Naive thymus-derived CD4-positive, alpha-beta T cell (primary cell): ENCODE measurements at regions of chr4 and their contacts with region 1.

Region 1: GRCh38 chr4:7939377-7940108 is at the start of gene AFAP1:
- DNase-seq: peak; percentile 84 to 95 (median 89)
- ATAC-seq: peak; percentile 95
- H3K4me3 ChIP-seq: peak within 1 kb of the TSS; percentile 68
- H3K4me3 Mint-ChIP-seq: peak within 1 kb of the TSS; percentile 64 to 91 (median 74)
- H3K27ac ChIP-seq: peak within 1 kb of the TSS; percentile 78
- H3K27ac Mint-ChIP-seq: peak within 1 kb of the TSS in 4 of 9 donors; percentile 63 to 89 (median 74)
- H3K4me1 ChIP-seq: peaks cover 10 to 12% of the 10 kb centered on the region in 2 donors
- H3K4me1 Mint-ChIP-seq: peaks cover 16 to 42% (median 33%) of the 10 kb centered on the region in 7 donors
- H3K27me3 ChIP-seq: no peaks in the 10 kb centered on the region
- H3K27me3 Mint-ChIP-seq: peaks cover 0 to 30% (median 0%) of the 10 kb centered on the region in 5 donors
- total RNA-seq, gene AFAP1: 8.6 to 27.2 (median 13.3) TPM

Region 2: DNA sequence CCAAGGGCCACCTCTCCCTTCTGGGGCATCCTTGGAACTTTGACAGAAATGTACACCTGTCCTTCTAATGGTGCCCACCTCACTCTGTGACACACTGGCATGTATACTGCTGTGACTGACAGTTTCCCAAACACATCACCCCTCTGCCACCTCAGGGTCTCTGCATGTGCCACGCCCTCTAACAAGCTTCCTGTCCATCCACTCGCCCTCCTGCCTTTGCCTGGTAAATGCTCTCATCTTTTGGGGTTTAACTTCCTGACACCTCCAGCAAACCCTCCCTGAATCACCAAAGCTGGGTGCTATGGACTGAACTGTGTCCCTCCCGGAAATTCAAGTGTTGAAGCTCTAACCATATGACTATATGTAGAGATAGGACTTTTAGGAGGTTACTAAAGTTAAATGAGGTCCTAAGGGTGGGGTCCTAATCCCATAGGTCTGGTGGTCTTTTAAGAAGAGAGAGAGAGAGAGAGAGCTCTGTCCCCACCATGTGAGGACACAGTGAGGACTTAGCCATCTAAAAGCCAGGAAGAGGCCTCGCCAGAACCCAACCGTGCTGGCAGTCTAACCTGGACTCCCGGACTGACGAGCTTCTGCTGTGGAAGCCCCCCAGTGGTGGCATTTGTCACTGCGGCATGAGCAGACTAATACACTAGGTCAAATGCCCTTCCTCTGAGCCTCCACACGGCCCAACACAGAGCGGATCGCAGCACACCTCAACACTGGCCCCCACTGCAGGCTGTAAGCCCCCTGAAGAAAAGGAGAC is 95.5 kb before region 1 on chr4:
- CTCF ChIA-PET with region 1: interaction called, 6 read pairs
- POLR2A ChIA-PET with region 1: interaction called, 5 read pairs
- intact Hi-C with region 1: loop called in 1 of 2 experiments (anchors 1 kb)
- DNase-seq: peak; percentile 12 to 66 (median 42)
- ATAC-seq: peak; percentile 84
- H3K4me3 ChIP-seq: no peak overlapping the region
- H3K4me3 Mint-ChIP-seq: peak overlapping the region in 2 of 10 donors; percentile 1 to 45
- H3K27ac ChIP-seq: no peak overlapping the region
- H3K27ac Mint-ChIP-seq: peak overlapping the region in 4 of 9 donors; percentile 10 to 62 (median 22)
- H3K4me1 ChIP-seq: peaks cover 4 to 6% of the 10 kb centered on the region in 2 donors
- H3K4me1 Mint-ChIP-seq: peaks cover 17 to 46% (median 40%) of the 10 kb centered on the region in 7 donors
- H3K27me3 ChIP-seq: no peaks in the 10 kb centered on the region
- H3K27me3 Mint-ChIP-seq: no peaks in the 10 kb centered on the region

Region 3: GRCh38 chr4:7863911-7864681 is 75.4 kb before region 1 on chr4:
- CTCF ChIA-PET with region 1: interaction called, 5 read pairs
- POLR2A ChIA-PET with region 1: interaction called, 5 read pairs
- intact Hi-C with region 1: loop called in 1 of 2 experiments (anchors 1 kb)
- DNase-seq: peak in 7 of 9 donors; percentile 20 to 68 (median 38)
- ATAC-seq: peak; percentile 60
- H3K4me3 ChIP-seq: no peak overlapping the region
- H3K4me3 Mint-ChIP-seq: peak overlapping the region in 7 of 10 donors; percentile 36 to 75 (median 65)
- H3K27ac ChIP-seq: no peak overlapping the region
- H3K27ac Mint-ChIP-seq: peak overlapping the region; percentile 67 to 96 (median 89)
- H3K4me1 ChIP-seq: peaks cover 0 to 10% of the 10 kb centered on the region in 2 donors
- H3K4me1 Mint-ChIP-seq: peaks cover 8 to 45% (median 33%) of the 10 kb centered on the region in 7 donors
- H3K27me3 ChIP-seq: no peaks in the 10 kb centered on the region
- H3K27me3 Mint-ChIP-seq: peaks cover 0 to 6% (median 0%) of the 10 kb centered on the region in 5 donors

Region 4: GRCh38 chr4:7890635-7891393 is 48.7 kb before region 1 on chr4:
- CTCF ChIA-PET with region 1: no interaction called
- POLR2A ChIA-PET with region 1: no interaction called
- intact Hi-C with region 1: loop called in 1 of 2 experiments (anchors 5 kb)
- DNase-seq: no peak
- ATAC-seq: no peak
- H3K4me3 ChIP-seq: no peak overlapping the region
- H3K4me3 Mint-ChIP-seq: no peak overlapping the region
- H3K27ac ChIP-seq: no peak overlapping the region
- H3K27ac Mint-ChIP-seq: peak overlapping the region in 1 of 9 donors; percentile 23
- H3K4me1 ChIP-seq: no peaks in the 10 kb centered on the region
- H3K4me1 Mint-ChIP-seq: peaks cover 6 to 44% (median 33%) of the 10 kb centered on the region in 7 donors
- H3K27me3 ChIP-seq: no peaks in the 10 kb centered on the region
- H3K27me3 Mint-ChIP-seq: peaks cover 0 to 6% (median 3%) of the 10 kb centered on the region in 5 donors

Region 5: DNA sequence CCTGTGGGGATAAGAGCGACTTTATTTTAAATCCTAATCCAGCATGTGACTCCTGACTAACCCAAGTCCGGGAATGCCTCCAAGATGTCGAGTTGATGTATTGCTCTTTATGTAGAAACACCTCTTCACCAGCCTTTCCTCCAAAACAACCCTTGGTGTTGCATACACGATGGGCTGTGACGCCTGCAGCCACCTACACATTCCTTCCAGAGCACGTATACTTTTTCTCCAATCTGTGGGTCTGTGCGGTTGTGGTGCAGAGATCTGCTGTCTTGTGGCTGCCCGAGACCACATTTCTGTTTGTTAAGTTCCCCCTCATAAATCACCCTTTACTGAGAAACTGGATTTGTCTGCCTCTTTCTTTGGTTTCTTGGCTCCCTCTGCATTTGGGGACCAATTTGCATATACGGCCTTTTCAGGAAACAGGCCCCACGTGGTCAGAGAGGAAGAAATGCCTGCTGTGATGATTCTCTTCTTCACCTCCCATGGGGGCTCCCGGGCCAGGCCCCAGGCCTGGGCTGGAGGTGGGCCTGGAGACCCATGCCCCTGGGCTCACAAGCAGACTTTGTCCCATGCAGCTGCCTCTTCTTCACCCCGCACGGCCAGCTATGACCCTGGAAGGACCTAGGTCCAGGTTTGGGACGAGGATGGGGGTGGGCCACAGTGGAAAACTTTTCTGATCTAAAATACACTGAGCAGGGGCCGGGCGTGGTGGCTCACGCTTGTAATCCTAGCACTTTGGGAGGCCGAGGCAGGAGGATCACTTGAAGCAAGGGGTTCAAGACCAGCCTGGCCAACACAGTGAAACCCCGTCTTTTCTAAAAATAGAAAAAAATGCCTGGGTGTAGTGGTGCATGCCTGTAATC is 21.5 kb after region 1 on chr4:
- CTCF ChIA-PET with region 1: interaction called, 3 read pairs
- POLR2A ChIA-PET with region 1: interaction called, 12 read pairs
- intact Hi-C with region 1: loop called (anchors 1 kb)
- DNase-seq: peak in 8 of 9 donors; percentile 20 to 81 (median 31)
- ATAC-seq: peak; percentile 62
- H3K4me3 ChIP-seq: no peak overlapping the region
- H3K4me3 Mint-ChIP-seq: peak overlapping the region in 9 of 10 donors; percentile 38 to 74 (median 58)
- H3K27ac ChIP-seq: no peak overlapping the region
- H3K27ac Mint-ChIP-seq: peak overlapping the region; percentile 38 to 87 (median 72)
- H3K4me1 ChIP-seq: peaks cover 22 to 26% of the 10 kb centered on the region in 2 donors
- H3K4me1 Mint-ChIP-seq: peaks cover 16 to 54% (median 33%) of the 10 kb centered on the region in 7 donors
- H3K27me3 ChIP-seq: no peaks in the 10 kb centered on the region
- H3K27me3 Mint-ChIP-seq: peaks cover 0 to 6% (median 0%) of the 10 kb centered on the region in 5 donors

Region 6: GRCh38 chr4:7987148-7987989 is 47.8 kb after region 1 on chr4:
- CTCF ChIA-PET with region 1: interaction called, 4 read pairs
- POLR2A ChIA-PET with region 1: no interaction called
- intact Hi-C with region 1: loop called in 1 of 2 experiments (anchors 1 kb)
- DNase-seq: peak; percentile 48 to 74 (median 67)
- ATAC-seq: peak; percentile 83
- H3K4me3 ChIP-seq: no peak overlapping the region
- H3K4me3 Mint-ChIP-seq: no peak overlapping the region
- H3K27ac ChIP-seq: no peak overlapping the region
- H3K27ac Mint-ChIP-seq: peak overlapping the region in 1 of 9 donors; percentile 67
- H3K4me1 ChIP-seq: no peaks in the 10 kb centered on the region
- H3K4me1 Mint-ChIP-seq: peaks cover 0 to 11% (median 9%) of the 10 kb centered on the region in 7 donors
- H3K27me3 ChIP-seq: no peaks in the 10 kb centered on the region
- H3K27me3 Mint-ChIP-seq: peaks cover 0 to 3% (median 0%) of the 10 kb centered on the region in 5 donors

Region 7: DNA sequence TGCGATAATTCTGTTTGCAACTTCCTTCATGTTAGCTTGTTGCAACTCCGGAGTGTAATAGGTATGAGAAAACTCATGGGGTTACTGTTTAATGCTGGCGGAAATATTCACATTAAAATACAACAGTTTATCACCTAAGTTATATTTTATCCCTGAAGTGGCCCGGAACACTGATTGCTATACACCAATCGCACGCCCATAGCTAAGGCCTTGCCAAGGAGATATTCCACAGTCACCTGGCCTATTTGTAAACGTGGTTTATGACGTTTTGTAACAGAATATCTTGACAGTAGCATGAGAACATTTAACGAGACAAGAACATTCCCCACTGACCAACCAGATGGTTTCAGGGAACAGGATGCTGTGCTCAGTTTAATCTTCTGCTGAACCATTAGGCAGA is 1207.4 kb after region 1 on chr4:
- CTCF ChIA-PET with region 1: no interaction called
- POLR2A ChIA-PET with region 1: no interaction called
- intact Hi-C with region 1: loop called in 1 of 2 experiments (anchors 5 kb)
- DNase-seq: no peak
- ATAC-seq: no peak
- H3K4me3 ChIP-seq: no peak overlapping the region
- H3K4me3 Mint-ChIP-seq: no peak overlapping the region
- H3K27ac ChIP-seq: no peak overlapping the region
- H3K27ac Mint-ChIP-seq: no peak overlapping the region
- H3K4me1 ChIP-seq: no peaks in the 10 kb centered on the region
- H3K4me1 Mint-ChIP-seq: peaks cover 0 to 10% (median 4%) of the 10 kb centered on the region in 7 donors
- H3K27me3 ChIP-seq: no peaks in the 10 kb centered on the region
- H3K27me3 Mint-ChIP-seq: no peaks in the 10 kb centered on the region